ENCODE measurements at regions of chr11 and their contacts with region 1.

Region 1: GRCh38 chr11:76175783-76176182 is 30.5 kb downstream of the WNT11 start:
- DNase-seq: no peak

Region 2: GRCh38 chr11:76152086-76152681 is 23.6 kb before region 1 on chr11:
- intact Hi-C with region 1: loop called in 1 of 2 experiments (anchors 1 kb)
- DNase-seq: peak; percentile 97

Region 3: GRCh38 chr11:76200006-76200940 is 24.5 kb after region 1 on chr11:
- intact Hi-C with region 1: no loop called
- DNase-seq: no peak

Measured in posterior vena cava (tissue), 2 donors.